Lower leg skin (tissue), 4 donors: ENCODE measurements at regions of chr6 and their contacts with region 1.

Region 1: DNA sequence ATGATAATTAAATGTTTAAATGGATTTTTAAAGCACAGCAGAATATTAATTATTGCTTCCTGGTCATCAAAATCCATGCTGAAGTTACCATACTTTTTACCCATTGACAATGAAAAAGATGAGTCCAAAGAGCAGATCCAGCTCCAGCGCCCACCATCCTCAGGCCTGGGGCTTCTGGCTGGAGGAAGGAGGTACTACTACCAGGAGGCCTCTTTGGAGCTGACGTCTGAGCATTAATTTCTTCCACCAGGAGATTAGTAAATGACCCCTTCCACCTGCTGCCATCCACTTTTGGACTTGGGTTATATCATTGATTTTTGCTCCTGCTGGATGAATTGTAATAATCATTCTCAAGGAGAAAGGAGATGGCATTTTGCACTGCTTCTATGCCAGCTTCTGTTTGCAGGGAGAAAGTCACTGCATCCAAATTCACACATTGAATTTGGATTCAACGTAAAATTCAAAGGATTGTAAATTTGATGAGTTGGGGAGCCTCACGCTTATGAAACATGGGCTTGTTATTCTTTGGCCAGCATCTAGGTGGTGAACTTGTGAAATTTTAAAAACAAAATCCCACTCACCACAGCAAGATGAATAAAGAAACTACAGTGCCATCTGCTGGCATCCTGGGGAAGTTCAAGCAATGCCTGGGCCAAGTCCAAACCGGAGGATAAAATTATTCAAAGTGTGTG is 121.8 kb downstream of the SASH1 start:
- DNase-seq: peak; percentile 75 to 95
- H3K4me3 ChIP-seq: no peak overlapping the region
- CTCF ChIP-seq: peak in 1 of 3 donors; percentile 75
- POLR2A ChIP-seq: no peak

Region 2: DNA sequence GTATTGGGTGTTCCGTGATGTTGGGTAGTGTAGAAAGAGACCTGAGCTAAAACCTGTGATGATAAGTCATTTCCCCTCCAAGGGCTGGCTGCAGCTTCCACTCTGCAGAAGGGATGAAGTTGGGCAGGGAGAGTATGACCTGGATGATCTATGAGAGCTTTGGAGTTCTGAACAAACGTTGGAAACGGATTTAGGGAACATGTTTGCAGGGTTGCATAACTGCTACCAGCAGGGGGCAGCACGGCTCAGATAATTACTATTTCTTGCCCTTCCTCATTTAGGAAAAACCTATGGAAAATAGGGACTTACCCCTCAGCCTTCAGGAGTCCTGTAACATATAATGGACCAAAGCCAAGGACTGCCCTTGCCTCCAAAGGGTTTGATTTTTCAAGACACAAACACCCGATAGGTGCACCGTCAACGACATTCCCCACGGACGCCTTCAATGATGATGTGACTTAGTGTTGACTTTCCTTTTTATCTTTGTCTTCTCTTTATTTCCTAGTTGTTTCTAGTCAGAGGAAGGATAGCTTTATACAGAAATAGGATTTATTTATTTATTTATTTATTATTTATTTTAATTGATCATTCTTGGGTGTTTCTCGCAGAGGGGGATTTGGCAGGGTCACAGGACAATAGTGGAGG is 286.8 kb before region 1 on chr6:
- intact Hi-C with region 1: loop called (anchors 10 kb)
- DNase-seq: peak; percentile 60 to 91
- H3K4me3 ChIP-seq: no peak overlapping the region
- CTCF ChIP-seq: peak in 1 of 3 donors; percentile 84
- POLR2A ChIP-seq: no peak

Region 3: DNA sequence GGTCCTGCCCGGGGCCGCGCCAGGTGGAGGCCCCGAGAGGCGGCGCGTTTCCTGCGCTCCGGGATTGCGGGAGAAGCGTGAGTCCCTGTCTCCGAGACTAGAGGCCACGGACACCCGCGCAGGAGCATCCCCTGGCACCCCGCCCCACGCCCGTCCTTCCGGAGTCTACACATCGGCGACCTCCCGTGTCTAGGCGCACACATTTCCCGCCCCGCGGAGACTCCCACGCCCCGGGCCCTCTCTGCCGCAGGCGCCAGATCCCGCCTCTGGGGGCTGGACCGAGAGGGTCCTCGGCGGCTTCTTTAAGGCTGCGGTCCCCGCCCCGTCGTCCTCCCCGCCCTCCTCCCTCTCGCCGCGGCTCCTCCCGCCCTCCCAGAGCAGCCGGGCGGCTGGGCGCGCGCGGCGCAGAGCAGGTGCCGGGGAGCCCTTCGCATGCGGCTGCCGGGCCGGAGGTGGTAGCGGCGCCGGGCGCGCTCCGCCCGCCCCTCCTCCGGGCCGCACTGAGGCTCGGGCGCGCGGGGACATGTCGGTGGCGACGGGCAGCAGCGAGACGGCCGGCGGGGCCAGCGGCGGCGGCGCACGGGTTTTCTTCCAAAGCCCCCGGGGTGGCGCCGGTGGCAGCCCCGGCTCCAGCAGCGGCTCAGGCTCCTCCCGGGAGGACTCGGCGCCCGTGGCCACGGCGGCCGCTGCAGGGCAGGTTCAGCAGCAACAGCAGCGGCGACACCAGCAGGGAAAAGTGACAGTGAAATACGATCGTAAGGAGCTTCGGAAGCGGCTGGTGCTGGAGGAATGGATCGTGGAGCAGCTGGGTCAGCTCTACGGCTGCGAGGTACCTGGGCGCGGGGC is 1678.4 kb after region 1 on chr6 and contains the start of gene PPP1R14C:
- intact Hi-C with region 1: no loop called
- DNase-seq: no peak
- H3K4me3 ChIP-seq: peak within 1 kb of the TSS; percentile 37
- CTCF ChIP-seq: no peak
- POLR2A ChIP-seq: no peak
- total RNA-seq, gene PPP1R14C: 116 to 145 (median 127) TPM